ENCODE measurements at regions of chr12 and their contacts with region 1.

Region 1: GRCh38 chr12:115216300-115216699 is 532.3 kb upstream of the TBX3 start:
- DNase-seq: no peak
- H3K4me3 ChIP-seq: no peak overlapping the region
- H3K27ac ChIP-seq: no peak overlapping the region
- H3K4me1 ChIP-seq: no peaks in the 10 kb centered on the region
- H3K27me3 ChIP-seq: no peaks in the 10 kb centered on the region
- CTCF ChIP-seq: no peak
- POLR2A ChIP-seq: no peak

Region 2: GRCh38 chr12:115155665-115156645 is 60.3 kb before region 1 on chr12:
- intact Hi-C with region 1: no loop called
- DNase-seq: no peak
- H3K4me3 ChIP-seq: no peak overlapping the region
- H3K27ac ChIP-seq: no peak overlapping the region
- H3K4me1 ChIP-seq: no peaks in the 10 kb centered on the region
- H3K27me3 ChIP-seq: no peaks in the 10 kb centered on the region
- CTCF ChIP-seq: no peak
- POLR2A ChIP-seq: no peak

Region 3: GRCh38 chr12:115521771-115522409 is 305.6 kb after region 1 on chr12:
- intact Hi-C with region 1: loop called (anchors 5 kb)
- DNase-seq: no peak
- H3K4me3 ChIP-seq: no peak overlapping the region
- H3K27ac ChIP-seq: no peak overlapping the region
- H3K4me1 ChIP-seq: no peaks in the 10 kb centered on the region
- H3K27me3 ChIP-seq: no peaks in the 10 kb centered on the region
- CTCF ChIP-seq: no peak
- POLR2A ChIP-seq: no peak